ENCODE measurements at regions of chr1 and their contacts with region 1.

Region 1: DNA sequence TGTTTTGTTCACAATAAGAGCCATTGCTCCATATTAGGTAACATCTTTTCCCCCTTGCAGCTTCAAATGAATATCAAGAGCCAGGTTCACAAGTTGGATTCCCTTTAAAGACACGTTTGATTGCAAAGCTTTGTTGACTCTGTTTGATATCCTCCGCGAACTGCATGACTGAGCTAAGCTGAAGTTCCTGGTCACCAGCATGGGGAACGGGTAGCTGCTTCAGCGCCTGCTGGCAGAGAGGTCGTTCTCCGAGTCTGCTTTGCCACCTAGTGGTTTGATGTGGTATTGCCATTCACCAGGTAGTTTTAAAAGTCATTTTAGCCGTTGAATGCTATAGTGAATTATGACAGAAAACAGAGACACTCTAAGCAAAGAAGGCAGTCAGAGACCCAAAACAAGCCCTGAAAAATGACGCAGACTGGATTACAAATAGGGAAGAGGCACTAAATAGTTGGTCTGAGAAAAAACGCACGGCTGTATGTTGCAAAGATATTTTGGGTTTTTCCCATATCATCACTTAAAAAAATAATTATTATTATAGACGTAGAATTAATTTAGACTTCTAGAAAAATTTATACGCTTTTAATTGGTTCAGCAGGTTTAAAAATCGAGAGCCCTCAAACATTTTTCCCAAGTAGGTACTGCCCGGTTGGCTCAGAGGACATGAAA is 193.5 kb upstream of the FMN2 start:
- DNase-seq: peak; percentile 42 to 80 (median 72)
- ATAC-seq: peak; percentile 93
- H3K4me3 ChIP-seq: no peak overlapping the region
- H3K4me3 Mint-ChIP-seq: no peak overlapping the region
- H3K27ac ChIP-seq: no peak overlapping the region
- H3K27ac Mint-ChIP-seq: no peak overlapping the region
- H3K4me1 ChIP-seq: no peaks in the 10 kb centered on the region
- H3K4me1 Mint-ChIP-seq: peaks cover 2% of the 10 kb centered on the region
- H3K27me3 ChIP-seq: no peaks in the 10 kb centered on the region
- H3K27me3 Mint-ChIP-seq: peaks cover 7% of the 10 kb centered on the region
- CTCF ChIP-seq: peak; percentile 89

Region 2: GRCh38 chr1:238252033-238252802 is 1646.0 kb before region 1 on chr1:
- CTCF ChIA-PET with region 1: no interaction called
- POLR2A ChIA-PET with region 1: no interaction called
- intact Hi-C with region 1: loop called (anchors 5 kb)
- DNase-seq: peak in 3 of 9 experiments; percentile 4 to 16 (median 5)
- ATAC-seq: no peak
- H3K4me3 ChIP-seq: no peak overlapping the region
- H3K4me3 Mint-ChIP-seq: no peak overlapping the region
- H3K27ac ChIP-seq: no peak overlapping the region
- H3K27ac Mint-ChIP-seq: no peak overlapping the region
- H3K4me1 ChIP-seq: no peaks in the 10 kb centered on the region
- H3K4me1 Mint-ChIP-seq: no peaks in the 10 kb centered on the region
- H3K27me3 ChIP-seq: no peaks in the 10 kb centered on the region
- H3K27me3 Mint-ChIP-seq: no peaks in the 10 kb centered on the region
- CTCF ChIP-seq: no peak

Region 3: DNA sequence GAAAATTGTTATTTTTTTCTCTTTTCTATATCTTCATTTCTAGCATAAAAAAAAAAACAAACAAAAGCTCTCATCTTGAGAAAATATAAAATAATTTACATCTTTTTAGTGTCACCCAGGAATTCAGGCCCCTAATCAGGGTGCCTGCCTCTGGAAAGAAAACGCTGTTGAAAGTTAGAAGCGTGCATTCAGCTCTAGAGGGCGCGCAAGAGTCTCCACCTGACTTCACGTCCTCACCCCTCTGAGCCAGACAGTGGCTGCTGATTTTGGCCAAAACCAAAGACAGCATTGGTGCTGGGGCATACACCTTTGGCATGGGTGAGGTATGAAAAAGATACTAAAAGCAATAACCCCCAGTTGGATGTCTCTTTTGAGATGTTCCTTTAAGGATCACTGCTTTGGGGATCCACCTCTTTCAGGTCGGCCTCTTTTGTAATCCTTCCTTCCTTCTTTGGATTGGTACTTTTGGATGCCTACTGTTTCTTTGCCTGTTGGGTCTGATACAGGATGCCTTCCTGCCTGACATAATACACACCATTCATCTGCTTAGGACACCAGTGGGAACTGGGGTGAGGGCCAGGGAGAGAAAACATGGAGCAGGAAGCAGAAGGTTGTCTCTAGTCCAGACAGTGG is 589.4 kb before region 1 on chr1:
- CTCF ChIA-PET with region 1: no interaction called
- POLR2A ChIA-PET with region 1: no interaction called
- intact Hi-C with region 1: loop called (anchors 1 to 5 kb)
- DNase-seq: peak in 5 of 9 experiments; percentile 3 to 21 (median 10)
- ATAC-seq: no peak
- H3K4me3 ChIP-seq: no peak overlapping the region
- H3K4me3 Mint-ChIP-seq: no peak overlapping the region
- H3K27ac ChIP-seq: no peak overlapping the region
- H3K27ac Mint-ChIP-seq: no peak overlapping the region
- H3K4me1 ChIP-seq: no peaks in the 10 kb centered on the region
- H3K4me1 Mint-ChIP-seq: no peaks in the 10 kb centered on the region
- H3K27me3 ChIP-seq: no peaks in the 10 kb centered on the region
- H3K27me3 Mint-ChIP-seq: no peaks in the 10 kb centered on the region
- CTCF ChIP-seq: peak; percentile 41

Region 4: GRCh38 chr1:239396995-239397394 is 501.2 kb before region 1 on chr1:
- CTCF ChIA-PET with region 1: interaction called, 68 read pairs
- POLR2A ChIA-PET with region 1: no interaction called
- intact Hi-C with region 1: no loop called
- DNase-seq: no peak
- ATAC-seq: no peak
- H3K4me3 ChIP-seq: no peak overlapping the region
- H3K4me3 Mint-ChIP-seq: no peak overlapping the region
- H3K27ac ChIP-seq: no peak overlapping the region
- H3K27ac Mint-ChIP-seq: no peak overlapping the region
- H3K4me1 ChIP-seq: no peaks in the 10 kb centered on the region
- H3K4me1 Mint-ChIP-seq: peaks cover 2% of the 10 kb centered on the region
- H3K27me3 ChIP-seq: no peaks in the 10 kb centered on the region
- H3K27me3 Mint-ChIP-seq: peaks cover 39% of the 10 kb centered on the region
- CTCF ChIP-seq: no peak

Region 5: DNA sequence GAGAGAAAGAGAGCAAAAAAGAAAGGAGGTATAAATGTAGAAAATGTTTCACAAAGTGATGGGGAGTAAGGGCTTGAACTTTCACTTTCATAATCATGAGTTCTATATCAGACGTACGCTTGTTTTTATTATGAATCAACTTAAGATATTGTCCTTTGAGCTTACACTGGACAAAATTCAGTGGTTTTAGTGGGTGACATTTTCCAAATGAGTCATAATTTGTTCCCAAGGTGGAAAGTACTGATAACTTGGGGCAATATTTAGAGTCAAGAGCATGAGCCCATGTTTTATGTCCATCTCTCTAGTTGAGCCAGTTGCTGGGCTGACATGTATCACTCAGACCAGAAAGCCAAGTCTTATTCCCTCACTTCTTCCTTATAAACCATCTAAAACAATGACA is 350.2 kb before region 1 on chr1:
- CTCF ChIA-PET with region 1: no interaction called
- POLR2A ChIA-PET with region 1: no interaction called
- intact Hi-C with region 1: no loop called
- DNase-seq: peak in 2 of 9 experiments; percentile 12 to 29
- ATAC-seq: peak; percentile 46
- H3K4me3 ChIP-seq: peak overlapping the region; percentile 27 to 37
- H3K4me3 Mint-ChIP-seq: peak overlapping the region; percentile 72
- H3K27ac ChIP-seq: peak overlapping the region in 1 of 2 experiments; percentile 25
- H3K27ac Mint-ChIP-seq: peak overlapping the region; percentile 85
- H3K4me1 ChIP-seq: no peaks in the 10 kb centered on the region
- H3K4me1 Mint-ChIP-seq: peaks cover 16% of the 10 kb centered on the region
- H3K27me3 ChIP-seq: no peaks in the 10 kb centered on the region
- H3K27me3 Mint-ChIP-seq: no peaks in the 10 kb centered on the region
- CTCF ChIP-seq: no peak

Region 6: DNA sequence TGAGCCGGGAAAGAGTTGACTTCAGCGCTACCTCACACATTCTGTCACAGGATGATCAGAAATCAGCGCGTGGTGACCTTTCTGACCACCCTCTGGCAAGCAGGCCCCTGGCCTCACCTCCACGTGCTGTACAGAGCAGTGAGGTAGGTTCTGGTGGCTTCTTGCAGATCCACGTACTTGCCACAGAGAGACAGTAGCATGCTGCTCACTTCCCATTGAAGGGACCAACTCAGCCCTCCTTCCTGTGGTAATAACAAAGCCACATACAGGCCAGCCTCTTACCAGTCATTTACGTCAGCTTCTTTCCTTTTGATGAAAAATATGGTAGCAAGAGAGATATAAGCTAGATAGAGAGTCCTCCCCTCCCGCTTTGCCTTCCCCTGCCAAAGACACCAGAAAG is 311.1 kb before region 1 on chr1:
- CTCF ChIA-PET with region 1: interaction called, 5 read pairs
- POLR2A ChIA-PET with region 1: no interaction called
- intact Hi-C with region 1: loop called in 1 of 2 experiments (anchors 2 kb)
- DNase-seq: peak in 8 of 9 experiments; percentile 1 to 80 (median 42)
- ATAC-seq: peak; percentile 99
- H3K4me3 ChIP-seq: no peak overlapping the region
- H3K4me3 Mint-ChIP-seq: peak overlapping the region; percentile 20
- H3K27ac ChIP-seq: no peak overlapping the region
- H3K27ac Mint-ChIP-seq: peak overlapping the region; percentile 10
- H3K4me1 ChIP-seq: peaks cover 10% of the 10 kb centered on the region
- H3K4me1 Mint-ChIP-seq: peaks cover 14% of the 10 kb centered on the region
- H3K27me3 ChIP-seq: no peaks in the 10 kb centered on the region
- H3K27me3 Mint-ChIP-seq: no peaks in the 10 kb centered on the region
- CTCF ChIP-seq: peak; percentile 28

Region 7: GRCh38 chr1:239886266-239886665 is 11.9 kb before region 1 on chr1:
- CTCF ChIA-PET with region 1: interaction called, 26 read pairs
- POLR2A ChIA-PET with region 1: interaction called, 3 read pairs
- intact Hi-C with region 1: no loop called
- DNase-seq: no peak
- ATAC-seq: no peak
- H3K4me3 ChIP-seq: no peak overlapping the region
- H3K4me3 Mint-ChIP-seq: no peak overlapping the region
- H3K27ac ChIP-seq: no peak overlapping the region
- H3K27ac Mint-ChIP-seq: no peak overlapping the region
- H3K4me1 ChIP-seq: no peaks in the 10 kb centered on the region
- H3K4me1 Mint-ChIP-seq: no peaks in the 10 kb centered on the region
- H3K27me3 ChIP-seq: no peaks in the 10 kb centered on the region
- H3K27me3 Mint-ChIP-seq: no peaks in the 10 kb centered on the region
- CTCF ChIP-seq: no peak

Region 8: GRCh38 chr1:239922778-239923522 is 24.8 kb after region 1 on chr1:
- CTCF ChIA-PET with region 1: interaction called, 3 read pairs
- POLR2A ChIA-PET with region 1: no interaction called
- intact Hi-C with region 1: loop called in 1 of 2 experiments (anchors 1 kb)
- DNase-seq: no peak
- ATAC-seq: no peak
- H3K4me3 ChIP-seq: no peak overlapping the region
- H3K4me3 Mint-ChIP-seq: no peak overlapping the region
- H3K27ac ChIP-seq: no peak overlapping the region
- H3K27ac Mint-ChIP-seq: no peak overlapping the region
- H3K4me1 ChIP-seq: no peaks in the 10 kb centered on the region
- H3K4me1 Mint-ChIP-seq: no peaks in the 10 kb centered on the region
- H3K27me3 ChIP-seq: no peaks in the 10 kb centered on the region
- H3K27me3 Mint-ChIP-seq: no peaks in the 10 kb centered on the region
- CTCF ChIP-seq: no peak